Activated B cell treated with CpG ODN at 0.5 μM for 24 hours (primary cell): ENCODE measurements at regions of chr16 and their contacts with region 1.

Region 1: GRCh38 chr16:88790312-88791211 is 5.5 kb upstream of the PIEZO1 start:
- DNase-seq: peak; percentile 34
- ATAC-seq: peak; percentile 71
- H3K4me3 Mint-ChIP-seq: peak overlapping the region; percentile 55
- H3K27ac Mint-ChIP-seq: peak overlapping the region; percentile 79
- H3K4me1 Mint-ChIP-seq: peaks cover 52% of the 10 kb centered on the region
- H3K27me3 Mint-ChIP-seq: no peaks in the 10 kb centered on the region
- CTCF ChIP-seq: no peak

Region 2: GRCh38 chr16:88803264-88803987 is 12.9 kb after region 1 on chr16 and contains the start of gene CDT1:
- CTCF ChIA-PET with region 1: interaction called, 4 read pairs
- POLR2A ChIA-PET with region 1: interaction called, 7 read pairs
- intact Hi-C with region 1: loop called (anchors 1 kb)
- DNase-seq: peak; percentile 88
- ATAC-seq: peak; percentile 64
- H3K4me3 Mint-ChIP-seq: peak within 1 kb of the TSS; percentile 79
- H3K27ac Mint-ChIP-seq: peak within 1 kb of the TSS; percentile 79
- H3K4me1 Mint-ChIP-seq: peaks cover 22% of the 10 kb centered on the region
- H3K27me3 Mint-ChIP-seq: no peaks in the 10 kb centered on the region
- CTCF ChIP-seq: no peak
- total RNA-seq, gene CDT1: 4.3 and 5.5 TPM in 2 replicates

Region 3: DNA sequence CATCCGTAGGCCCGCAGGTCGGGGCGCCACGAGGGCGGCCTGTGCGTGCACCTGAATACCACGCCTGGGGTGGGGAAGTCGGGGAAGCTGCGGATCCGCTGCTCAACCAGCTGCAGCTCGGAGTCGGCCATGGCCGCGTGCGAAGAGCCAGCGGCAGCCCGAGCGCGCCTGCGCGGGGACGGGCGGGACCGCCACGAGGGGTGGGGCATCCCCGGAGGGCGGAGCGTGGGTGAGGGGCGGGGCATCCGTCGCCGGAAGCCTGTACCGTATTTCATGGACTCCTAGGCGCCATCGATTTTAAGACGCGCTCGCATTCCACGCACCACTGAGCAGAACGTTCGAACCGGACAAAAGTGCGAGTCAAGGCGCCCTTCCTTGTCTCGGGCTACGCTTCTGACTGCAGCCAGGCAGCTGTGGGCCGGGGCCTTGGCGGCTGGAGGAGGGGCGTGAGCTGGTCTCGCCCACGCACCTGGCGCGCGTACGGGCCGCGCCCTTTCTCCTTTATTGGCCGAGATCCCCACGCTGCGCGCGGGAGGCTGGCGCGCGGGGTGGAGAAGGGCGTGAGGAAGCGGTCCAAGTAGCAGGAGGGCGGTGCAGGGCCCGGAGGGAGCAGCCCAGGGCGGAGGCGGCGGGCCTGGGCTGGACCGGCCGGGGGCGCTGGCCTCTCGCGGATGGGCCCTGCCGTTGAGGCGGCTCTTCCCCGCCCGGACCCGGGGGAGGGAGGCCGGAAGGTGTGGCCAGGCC is 21.4 kb after region 1 on chr16 and contains the start of gene APRT:
- CTCF ChIA-PET with region 1: interaction called, 3 read pairs
- POLR2A ChIA-PET with region 1: interaction called, 18 read pairs
- intact Hi-C with region 1: loop called (anchors 2 kb)
- DNase-seq: peak; percentile 99
- ATAC-seq: peak; percentile 86
- H3K4me3 Mint-ChIP-seq: peak within 1 kb of the TSS; percentile 91
- H3K27ac Mint-ChIP-seq: peak within 1 kb of the TSS; percentile 97
- H3K4me1 Mint-ChIP-seq: peaks cover 17% of the 10 kb centered on the region
- H3K27me3 Mint-ChIP-seq: no peaks in the 10 kb centered on the region
- CTCF ChIP-seq: no peak
- total RNA-seq, gene APRT: 198 and 209 TPM in 2 replicates

Region 4: GRCh38 chr16:88844419-88845036 is 54.0 kb after region 1 on chr16:
- CTCF ChIA-PET with region 1: no interaction called
- POLR2A ChIA-PET with region 1: no interaction called
- intact Hi-C with region 1: no loop called
- DNase-seq: no peak
- ATAC-seq: no peak
- H3K4me3 Mint-ChIP-seq: no peak overlapping the region
- H3K27ac Mint-ChIP-seq: no peak overlapping the region
- H3K4me1 Mint-ChIP-seq: peaks cover 4% of the 10 kb centered on the region
- H3K27me3 Mint-ChIP-seq: no peaks in the 10 kb centered on the region
- CTCF ChIP-seq: no peak